Activated CD4-positive, alpha-beta memory T cell treated with anti-CD3 and anti-CD28 coated beads for 36 hours (primary cell): ENCODE measurements at regions of chr2 and their contacts with region 1.

Region 1: DNA sequence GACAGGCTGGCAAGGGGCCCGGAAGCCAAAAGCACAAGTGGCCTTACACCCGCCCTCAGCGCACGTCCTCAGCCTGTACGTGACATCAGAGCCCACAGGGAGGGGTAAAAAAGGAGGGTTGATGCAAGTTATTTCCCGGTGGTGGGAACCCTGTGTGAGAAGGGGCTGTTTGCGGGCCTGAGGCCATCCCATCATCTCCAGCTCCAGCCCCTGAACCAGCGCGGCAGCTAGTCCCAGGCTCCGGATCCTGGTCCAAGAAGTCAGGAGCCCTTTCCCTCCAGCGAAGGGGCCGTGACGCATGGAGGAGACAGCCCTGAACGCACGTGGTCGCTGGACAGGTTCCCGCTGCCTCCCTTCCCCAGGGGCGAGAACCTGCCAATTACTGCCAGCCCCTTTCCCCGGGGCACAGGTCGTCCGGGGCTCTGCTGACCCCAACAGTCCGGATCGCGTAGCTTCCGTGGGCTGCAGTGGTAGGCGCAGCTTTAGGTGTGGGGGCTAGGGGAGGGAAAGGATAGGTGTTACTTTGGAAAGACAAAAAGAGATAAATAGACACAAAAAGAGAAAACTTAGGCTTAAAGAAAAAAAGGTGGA is 1.3 kb upstream of the LRP2 start:
- DNase-seq: peak; percentile 66
- H3K4me3 Mint-ChIP-seq: peak overlapping the region; percentile 82
- H3K27ac Mint-ChIP-seq: no peak overlapping the region
- H3K4me1 Mint-ChIP-seq: peaks cover 33% of the 10 kb centered on the region
- H3K27me3 Mint-ChIP-seq: peaks cover 30% of the 10 kb centered on the region

Region 2: GRCh38 chr2:168961450-168962229 is 402.0 kb before region 1 on chr2:
- CTCF ChIA-PET with region 1: no interaction called
- POLR2A ChIA-PET with region 1: no interaction called
- intact Hi-C with region 1: loop called (anchors 10 kb)
- DNase-seq: no peak
- H3K4me3 Mint-ChIP-seq: no peak overlapping the region
- H3K27ac Mint-ChIP-seq: no peak overlapping the region
- H3K4me1 Mint-ChIP-seq: peaks cover 36% of the 10 kb centered on the region
- H3K27me3 Mint-ChIP-seq: no peaks in the 10 kb centered on the region

Region 3: DNA sequence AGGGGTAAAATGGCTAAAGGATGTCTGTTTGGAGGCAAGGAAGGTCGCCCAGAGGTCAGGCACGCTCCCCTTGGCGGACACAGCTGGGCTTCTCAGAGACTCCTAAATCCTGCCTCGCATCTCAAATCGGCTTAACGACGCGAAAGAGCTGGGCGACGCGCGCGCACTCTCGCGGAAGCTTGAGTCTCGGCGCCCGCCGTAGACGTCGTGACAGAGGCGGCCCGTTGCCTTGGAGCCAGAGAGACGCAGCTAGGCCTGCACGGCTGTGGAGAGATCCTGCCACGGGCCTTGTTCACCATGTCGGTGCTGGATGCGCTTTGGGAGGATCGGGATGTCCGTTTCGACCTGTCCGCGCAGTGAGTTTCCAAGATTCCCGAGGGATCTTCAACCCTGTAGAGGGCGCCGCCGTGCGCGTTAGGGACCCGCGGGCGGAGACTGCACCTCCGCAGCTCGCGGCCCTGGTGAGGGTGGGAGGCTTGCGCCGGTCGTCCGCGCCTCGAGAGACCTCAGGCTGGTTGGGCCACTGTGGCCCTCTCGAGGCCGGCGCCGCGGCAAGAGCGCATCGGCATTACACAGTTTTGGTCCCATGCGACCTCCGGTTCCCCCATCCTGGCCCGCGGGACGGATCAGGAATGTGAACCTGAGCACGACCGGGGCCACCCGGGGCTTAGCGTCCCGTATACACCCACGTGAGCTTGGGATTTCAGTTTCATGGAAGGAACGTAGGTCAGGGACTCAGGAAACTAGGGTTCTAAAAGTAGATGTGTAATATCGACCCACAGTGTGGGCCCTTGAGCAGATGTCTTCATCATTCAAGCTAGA is 115.8 kb after region 1 on chr2 and contains the start of gene BBS5:
- CTCF ChIA-PET with region 1: interaction called, 3 read pairs
- POLR2A ChIA-PET with region 1: no interaction called
- intact Hi-C with region 1: loop called (anchors 5 kb)
- DNase-seq: peak; percentile 87
- H3K4me3 Mint-ChIP-seq: peak within 1 kb of the TSS; percentile 87
- H3K27ac Mint-ChIP-seq: no peak within 1 kb of the TSS
- H3K4me1 Mint-ChIP-seq: peaks cover 13% of the 10 kb centered on the region
- H3K27me3 Mint-ChIP-seq: no peaks in the 10 kb centered on the region
- total RNA-seq, gene BBS5: 2.4 to 3.4 TPM

Region 4: GRCh38 chr2:169573160-169573973 is 209.7 kb after region 1 on chr2 and contains the start of gene FASTKD1:
- CTCF ChIA-PET with region 1: no interaction called
- POLR2A ChIA-PET with region 1: no interaction called
- intact Hi-C with region 1: loop called (anchors 10 kb)
- DNase-seq: peak; percentile 93
- H3K4me3 Mint-ChIP-seq: peak within 1 kb of the TSS; percentile 100
- H3K27ac Mint-ChIP-seq: peak within 1 kb of the TSS; percentile 89
- H3K4me1 Mint-ChIP-seq: peaks cover 25% of the 10 kb centered on the region
- H3K27me3 Mint-ChIP-seq: no peaks in the 10 kb centered on the region
- total RNA-seq, gene FASTKD1: 41.6 to 47.6 TPM